ENCODE measurements at regions of chr2 and their contacts with region 1.

Region 1: DNA sequence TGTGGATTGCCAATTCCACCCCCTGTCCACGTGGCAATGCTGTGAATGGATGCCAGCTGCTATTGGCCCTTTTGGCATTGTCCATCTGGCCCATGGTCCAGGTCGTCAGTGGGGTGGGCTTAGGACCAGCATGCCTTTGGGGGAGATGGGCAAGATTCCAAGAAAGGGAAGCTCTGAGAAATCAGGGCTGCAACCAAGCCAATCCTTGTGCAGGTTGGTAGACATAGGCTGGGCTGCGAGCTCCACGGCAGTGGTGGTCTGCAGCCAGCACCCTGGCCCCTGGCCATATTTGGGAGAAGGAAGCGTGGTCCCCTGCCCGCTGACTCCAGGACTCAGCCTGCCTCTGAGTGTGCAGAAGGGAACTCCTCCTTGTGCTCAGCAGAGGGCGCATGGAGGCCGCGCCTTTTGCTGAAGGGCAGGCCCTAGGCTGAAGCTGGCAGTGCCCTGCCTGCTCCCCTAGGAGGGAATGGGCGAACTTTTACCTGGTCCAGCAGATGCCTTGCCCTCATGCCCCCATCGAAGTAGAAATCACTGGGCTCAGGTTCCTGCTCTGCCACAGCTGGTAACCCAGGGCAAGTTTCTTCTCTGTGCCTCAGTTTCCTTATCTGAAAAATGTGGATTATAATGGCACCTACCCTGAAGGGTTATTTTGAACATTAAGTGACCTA is 5.4 kb downstream of the SPR start:
- DNase-seq: peak; percentile 51 to 88 (median 76)

Region 2: GRCh38 chr2:72979896-72980295 is 87.3 kb after region 1 on chr2:
- intact Hi-C with region 1: loop called (anchors 5 kb)
- DNase-seq: peak in 1 of 42 donors; percentile 29

Region 3: GRCh38 chr2:73085691-73086360 is 193.2 kb after region 1 on chr2:
- intact Hi-C with region 1: loop called (anchors 10 kb)
- DNase-seq: peak; percentile 82 to 96 (median 90)

Region 4: GRCh38 chr2:73163483-73164367 is 271.1 kb after region 1 on chr2:
- intact Hi-C with region 1: loop called (anchors 5 kb)
- DNase-seq: peak in 41 of 42 donors; percentile 59 to 89 (median 76)

Region 5: GRCh38 chr2:73176881-73177644 is 284.4 kb after region 1 on chr2:
- intact Hi-C with region 1: loop called (anchors 5 kb)
- DNase-seq: peak; percentile 80 to 96 (median 92)